Prostate gland (tissue), 2 donors: ENCODE measurements at regions of chr20 and their contacts with region 1.

Region 1: GRCh38 chr20:10596726-10597125 is 77.1 kb downstream of the JAG1 start:
- DNase-seq: no peak
- H3K4me3 ChIP-seq: no peak overlapping the region
- H3K27ac ChIP-seq: no peak overlapping the region
- H3K4me1 ChIP-seq: peaks cover 3% of the 10 kb centered on the region
- H3K27me3 ChIP-seq: no peaks in the 10 kb centered on the region
- CTCF ChIP-seq: no peak
- POLR2A ChIP-seq: no peak

Region 2: DNA sequence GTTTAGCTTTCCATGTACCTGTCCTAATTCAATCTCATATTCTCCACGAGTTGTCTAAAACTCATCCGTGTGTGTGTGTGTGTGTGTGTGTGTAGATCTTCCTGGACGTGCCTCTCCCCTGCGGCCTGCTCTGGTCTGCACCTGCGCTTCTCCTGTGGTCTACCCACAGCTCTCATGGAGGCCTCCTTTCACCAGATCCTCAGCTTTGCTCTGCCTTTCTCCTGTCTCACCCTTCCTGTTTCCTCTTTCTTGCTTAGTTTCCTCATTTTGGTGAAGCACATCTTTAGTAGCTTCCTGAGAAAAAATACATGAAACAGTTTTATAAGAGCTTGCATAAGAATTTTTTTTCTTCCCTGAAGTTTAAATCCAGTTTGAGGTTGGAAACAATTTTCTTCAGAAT is 143.5 kb before region 1 on chr20:
- intact Hi-C with region 1: no loop called
- DNase-seq: no peak
- H3K4me3 ChIP-seq: no peak overlapping the region
- H3K27ac ChIP-seq: no peak overlapping the region
- H3K4me1 ChIP-seq: no peaks in the 10 kb centered on the region
- H3K27me3 ChIP-seq: no peaks in the 10 kb centered on the region
- CTCF ChIP-seq: no peak
- POLR2A ChIP-seq: no peak

Region 3: GRCh38 chr20:10508468-10509251 is 88.1 kb before region 1 on chr20:
- intact Hi-C with region 1: loop called (anchors 5 kb)
- DNase-seq: peak; percentile 46
- H3K4me3 ChIP-seq: no peak overlapping the region
- H3K27ac ChIP-seq: peak overlapping the region; percentile 77 to 82
- H3K4me1 ChIP-seq: peaks cover 34% of the 10 kb centered on the region
- H3K27me3 ChIP-seq: no peaks in the 10 kb centered on the region
- CTCF ChIP-seq: no peak
- POLR2A ChIP-seq: no peak

Region 4: DNA sequence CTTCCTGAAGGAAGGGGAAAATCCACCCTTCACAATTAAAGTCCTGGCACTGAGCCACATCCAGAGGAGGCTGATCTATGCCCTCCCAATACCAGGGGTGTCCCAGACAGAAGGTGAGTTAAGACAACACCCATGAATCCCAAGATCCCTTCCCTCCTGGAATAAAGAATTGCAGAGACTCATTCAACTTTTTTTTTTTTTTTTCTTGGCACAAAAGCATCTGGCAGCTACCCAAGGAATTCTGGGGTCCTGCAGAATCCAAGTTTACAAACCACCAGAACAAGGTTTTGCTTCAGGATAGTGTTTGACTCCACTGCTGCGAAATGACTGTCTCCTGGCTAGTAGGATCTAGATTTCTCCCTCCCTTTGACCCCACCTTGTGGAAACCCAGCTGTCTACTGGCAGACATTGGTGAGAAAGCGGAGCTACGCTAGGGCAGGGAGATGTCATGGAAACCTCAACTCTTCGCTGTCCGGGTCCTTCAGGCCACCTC is 39.6 kb after region 1 on chr20:
- intact Hi-C with region 1: loop called (anchors 5 kb)
- DNase-seq: no peak
- H3K4me3 ChIP-seq: no peak overlapping the region
- H3K27ac ChIP-seq: peak overlapping the region; percentile 59 to 60
- H3K4me1 ChIP-seq: no peaks in the 10 kb centered on the region
- H3K27me3 ChIP-seq: no peaks in the 10 kb centered on the region
- CTCF ChIP-seq: no peak
- POLR2A ChIP-seq: no peak

Region 5: GRCh38 chr20:10654630-10655029 is 57.9 kb after region 1 on chr20:
- intact Hi-C with region 1: loop called (anchors 5 kb)
- DNase-seq: peak; percentile 90
- H3K4me3 ChIP-seq: no peak overlapping the region
- H3K27ac ChIP-seq: peak overlapping the region; percentile 52 to 67
- H3K4me1 ChIP-seq: peaks cover 11% of the 10 kb centered on the region
- H3K27me3 ChIP-seq: no peaks in the 10 kb centered on the region
- CTCF ChIP-seq: no peak
- POLR2A ChIP-seq: no peak